ENCODE measurements at regions of chr22 and their contacts with region 1.

Region 1: GRCh38 chr22:39319270-39320022 is at the start of gene RPL3:
- DNase-seq: peak; percentile 95 to 99 (median 98)
- H3K4me3 ChIP-seq: peak within 1 kb of the TSS; percentile 80 to 95 (median 93)
- H3K4me3 Mint-ChIP-seq: peak within 1 kb of the TSS; percentile 98 to 99
- H3K27ac ChIP-seq: peak within 1 kb of the TSS; percentile 94 to 96
- H3K27ac Mint-ChIP-seq: peak within 1 kb of the TSS; percentile 95 to 99 (median 99)
- H3K4me1 ChIP-seq: peaks cover 26 to 42% of the 10 kb centered on the region in 2 donors
- H3K4me1 Mint-ChIP-seq: peaks cover 37% of the 10 kb centered on the region
- H3K27me3 ChIP-seq: no peaks in the 10 kb centered on the region
- H3K27me3 Mint-ChIP-seq: peaks cover 0 to 3% (median 2%) of the 10 kb centered on the region in 3 donors
- CTCF ChIP-seq: no peak
- polyA plus RNA-seq, gene RPL3: 604 to 2,104 (median 698) TPM

Region 2: DNA sequence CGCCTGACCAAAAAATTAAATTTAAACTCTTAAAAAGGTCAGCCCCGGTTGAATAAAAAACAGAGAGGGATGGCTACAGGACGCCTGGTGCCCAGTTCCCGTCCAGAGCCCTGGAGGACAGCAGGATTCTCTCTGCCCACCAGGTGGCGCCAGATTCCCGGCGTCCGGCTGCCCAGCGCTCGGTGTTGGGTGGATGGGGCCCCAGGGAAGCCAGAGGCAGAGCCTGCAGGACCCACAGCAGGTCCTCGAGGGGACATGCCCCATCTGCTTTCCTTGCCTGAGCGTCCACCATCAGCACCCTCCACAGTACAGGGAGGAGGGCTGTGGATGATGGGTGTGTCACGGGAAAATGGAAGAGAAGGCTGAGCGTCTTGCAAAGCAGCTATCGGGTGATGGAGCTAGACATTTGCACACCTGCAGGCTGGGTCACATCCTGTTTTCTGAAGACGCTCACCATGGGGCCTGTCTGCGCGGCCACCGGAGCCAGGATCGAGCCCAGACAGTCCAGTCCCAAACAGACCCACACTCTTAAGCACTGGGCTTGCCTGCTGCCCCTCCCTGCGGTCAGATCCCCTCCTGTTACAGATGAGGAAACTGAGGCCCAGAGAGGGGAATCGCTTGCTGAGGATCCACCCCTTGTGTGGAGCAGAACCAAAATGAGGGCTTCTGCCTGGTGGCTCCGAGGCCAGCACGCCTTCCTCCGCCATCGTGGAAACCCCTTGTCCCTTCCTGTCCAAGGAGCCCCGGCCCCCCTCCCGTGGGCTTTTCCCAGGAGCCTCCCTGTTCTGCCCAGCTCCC is 148.4 kb before region 1 on chr22:
- intact Hi-C with region 1: loop called (anchors 2 kb)
- DNase-seq: peak; percentile 74 to 78 (median 77)
- H3K4me3 ChIP-seq: no peak overlapping the region
- H3K4me3 Mint-ChIP-seq: peak overlapping the region; percentile 48 to 54
- H3K27ac ChIP-seq: no peak overlapping the region
- H3K27ac Mint-ChIP-seq: no peak overlapping the region
- H3K4me1 ChIP-seq: peaks cover 11 to 12% of the 10 kb centered on the region in 2 donors
- H3K4me1 Mint-ChIP-seq: peaks cover 21% of the 10 kb centered on the region
- H3K27me3 ChIP-seq: peaks cover 0 to 23% of the 10 kb centered on the region in 2 donors
- H3K27me3 Mint-ChIP-seq: peaks cover 21 to 55% (median 35%) of the 10 kb centered on the region in 3 donors
- CTCF ChIP-seq: peak; percentile 96

Measured in CD14-positive monocyte (primary cell).